ENCODE measurements at regions of chr5 and their contacts with region 1.

Region 1: DNA sequence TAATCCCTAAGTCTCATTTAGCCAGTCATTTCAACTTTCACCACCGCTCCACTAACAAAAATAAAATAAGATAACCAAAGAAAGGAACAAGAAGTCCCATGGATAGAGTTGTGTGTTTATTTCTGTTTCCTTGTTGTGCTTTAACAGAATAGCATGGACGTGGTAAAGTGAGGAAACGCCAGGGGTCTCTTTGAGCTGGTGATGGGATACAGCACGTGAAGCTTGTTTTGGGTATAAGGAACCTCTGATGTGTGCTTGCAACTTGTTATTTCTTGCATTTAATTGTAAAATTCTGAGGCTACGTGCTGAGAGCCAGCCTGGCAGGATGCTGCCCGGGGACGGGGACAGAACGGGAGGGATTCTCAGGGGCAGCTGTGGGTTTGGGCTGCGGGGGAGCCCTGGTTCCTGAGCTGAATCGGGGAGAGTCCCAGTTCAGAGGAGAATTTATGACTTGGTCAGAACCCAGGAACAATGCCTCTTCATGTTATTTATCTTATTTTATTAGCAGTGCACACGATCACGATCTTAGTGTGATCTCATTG is 63.4 kb downstream of the ANKRD33B start:
- DNase-seq: no peak
- CTCF ChIP-seq: no peak

Region 2: GRCh38 chr5:10452768-10453331 is 174.4 kb before region 1 on chr5:
- in situ Hi-C with region 1: loop called (anchors 10 kb)
- DNase-seq: peak; percentile 84
- CTCF ChIP-seq: peak; percentile 63

Measured in GM13976 (cell line).